Endothelial cell of umbilical vein (primary cell): ENCODE measurements at regions of chr5 and their contacts with region 1.

Region 1: DNA sequence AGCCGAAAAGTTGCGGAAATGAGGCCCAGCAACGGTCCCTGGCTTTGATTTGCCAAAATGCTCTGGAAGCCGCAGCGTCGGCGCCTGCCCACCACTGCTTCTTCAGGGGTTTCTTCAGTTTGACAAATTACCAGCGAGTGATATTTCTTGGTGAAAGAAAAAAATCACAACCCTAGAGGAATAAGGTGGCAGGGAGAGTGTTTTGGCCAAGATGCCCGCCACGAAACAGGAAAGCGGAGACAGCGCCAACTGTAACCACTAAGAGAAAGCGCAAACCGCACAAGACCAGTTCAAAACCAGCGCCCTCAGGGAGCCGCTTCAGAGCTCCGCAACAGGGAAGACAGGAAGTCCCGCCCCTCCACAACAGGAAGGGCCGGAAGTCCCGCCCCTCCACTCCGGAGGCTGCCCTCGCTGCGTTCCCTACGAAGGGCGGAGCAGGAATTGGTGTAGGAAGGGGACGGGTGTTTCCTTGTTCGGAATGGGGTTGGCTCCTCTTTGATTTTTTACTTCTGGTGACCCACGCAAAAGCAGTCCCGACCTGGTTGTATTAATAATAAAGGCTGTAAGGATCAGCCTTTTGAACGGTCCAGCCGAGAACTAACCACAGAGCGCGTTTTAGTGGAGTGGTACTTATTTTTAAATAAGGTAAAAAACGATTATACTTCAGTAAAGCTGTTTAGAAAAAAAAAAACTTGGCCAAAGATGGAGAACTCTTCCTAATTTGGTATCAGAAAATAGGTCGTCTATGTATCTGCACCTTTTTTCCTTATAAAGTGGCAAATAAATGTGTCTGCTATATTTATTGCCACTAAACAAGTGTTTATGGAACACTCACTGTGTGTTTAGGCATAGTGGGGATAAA is at the start of gene C5orf34:
- DNase-seq: peak; percentile 97
- H3K4me3 ChIP-seq: peak within 1 kb of the TSS; percentile 68 to 93 (median 89)
- H3K27ac ChIP-seq: peak within 1 kb of the TSS; percentile 92
- H3K4me1 ChIP-seq: peaks cover 11% of the 10 kb centered on the region
- H3K27me3 ChIP-seq: no peaks in the 10 kb centered on the region
- CTCF ChIP-seq: no peak
- POLR2A ChIP-seq: peak; percentile 93
- total RNA-seq, gene C5orf34: 5.0 and 6.5 TPM in 2 replicates

Region 2: GRCh38 chr5:42749020-42749419 is 766.0 kb before region 1 on chr5:
- CTCF ChIA-PET with region 1: no interaction called
- POLR2A ChIA-PET with region 1: no interaction called
- dilution Hi-C with region 1: no loop called
- intact Hi-C with region 1: no loop called
- DNase-seq: no peak
- H3K4me3 ChIP-seq: no peak overlapping the region
- H3K27ac ChIP-seq: no peak overlapping the region
- H3K4me1 ChIP-seq: no peaks in the 10 kb centered on the region
- H3K27me3 ChIP-seq: peaks cover 0 to 2% of the 10 kb centered on the region in 2 experiments
- CTCF ChIP-seq: no peak
- POLR2A ChIP-seq: no peak

Region 3: DNA sequence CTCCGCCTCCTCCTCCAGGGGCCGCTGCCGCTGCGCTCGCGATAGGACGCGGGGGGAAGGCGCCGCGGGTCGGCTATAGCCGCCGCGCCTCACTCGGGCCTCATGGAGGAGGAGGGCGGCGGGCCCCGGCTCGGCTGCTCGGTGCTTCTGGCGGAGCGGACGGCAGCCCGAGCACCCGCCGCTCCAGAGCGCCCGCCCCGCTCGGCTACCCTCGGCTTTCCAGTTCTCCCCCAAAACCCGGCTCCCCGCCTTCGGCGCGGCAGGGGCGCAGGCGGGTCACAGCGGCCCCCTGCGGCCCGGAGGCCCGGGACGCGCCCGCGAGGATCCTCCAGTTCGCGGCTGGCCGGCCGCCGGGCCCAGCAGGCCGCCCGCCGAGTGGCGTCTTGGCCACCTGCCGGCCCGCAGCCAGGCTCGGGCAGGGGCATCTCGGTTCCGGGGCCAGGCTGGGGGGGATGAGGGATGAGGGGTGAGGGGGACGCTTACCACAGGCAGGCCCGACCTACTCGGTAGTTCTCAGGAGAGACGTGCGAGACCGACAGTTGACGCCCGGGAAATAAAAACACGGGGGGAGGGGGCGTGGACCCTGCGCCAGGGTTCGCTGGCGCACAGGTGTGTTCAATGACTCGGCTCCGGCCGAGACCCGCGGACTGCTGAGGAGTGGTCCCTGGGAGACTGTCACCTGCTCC is 42.0 kb after region 1 on chr5 and contains the start of gene PAIP1:
- CTCF ChIA-PET with region 1: no interaction called
- POLR2A ChIA-PET with region 1: no interaction called
- dilution Hi-C with region 1: no loop called
- intact Hi-C with region 1: loop called (anchors 1 kb)
- DNase-seq: peak; percentile 86
- H3K4me3 ChIP-seq: peak within 1 kb of the TSS; percentile 91 to 98 (median 96)
- H3K27ac ChIP-seq: peak within 1 kb of the TSS; percentile 73
- H3K4me1 ChIP-seq: peaks cover 25% of the 10 kb centered on the region
- H3K27me3 ChIP-seq: peaks cover 1 to 3% of the 10 kb centered on the region in 2 experiments
- CTCF ChIP-seq: peak; percentile 44 to 71
- POLR2A ChIP-seq: no peak
- total RNA-seq, gene PAIP1: 81.6 and 90.1 TPM in 2 replicates

Region 4: GRCh38 chr5:45376463-45376862 is 1861.4 kb after region 1 on chr5:
- CTCF ChIA-PET with region 1: no interaction called
- POLR2A ChIA-PET with region 1: no interaction called
- dilution Hi-C with region 1: no loop called
- intact Hi-C with region 1: loop called (anchors 10 kb)
- DNase-seq: peak; percentile 74
- H3K4me3 ChIP-seq: no peak overlapping the region
- H3K27ac ChIP-seq: peak overlapping the region; percentile 51
- H3K4me1 ChIP-seq: peaks cover 8% of the 10 kb centered on the region
- H3K27me3 ChIP-seq: no peaks in the 10 kb centered on the region
- CTCF ChIP-seq: no peak
- POLR2A ChIP-seq: no peak